IMR-90 (cell line): ENCODE measurements at regions of chr2 and their contacts with region 1.

Region 1: DNA sequence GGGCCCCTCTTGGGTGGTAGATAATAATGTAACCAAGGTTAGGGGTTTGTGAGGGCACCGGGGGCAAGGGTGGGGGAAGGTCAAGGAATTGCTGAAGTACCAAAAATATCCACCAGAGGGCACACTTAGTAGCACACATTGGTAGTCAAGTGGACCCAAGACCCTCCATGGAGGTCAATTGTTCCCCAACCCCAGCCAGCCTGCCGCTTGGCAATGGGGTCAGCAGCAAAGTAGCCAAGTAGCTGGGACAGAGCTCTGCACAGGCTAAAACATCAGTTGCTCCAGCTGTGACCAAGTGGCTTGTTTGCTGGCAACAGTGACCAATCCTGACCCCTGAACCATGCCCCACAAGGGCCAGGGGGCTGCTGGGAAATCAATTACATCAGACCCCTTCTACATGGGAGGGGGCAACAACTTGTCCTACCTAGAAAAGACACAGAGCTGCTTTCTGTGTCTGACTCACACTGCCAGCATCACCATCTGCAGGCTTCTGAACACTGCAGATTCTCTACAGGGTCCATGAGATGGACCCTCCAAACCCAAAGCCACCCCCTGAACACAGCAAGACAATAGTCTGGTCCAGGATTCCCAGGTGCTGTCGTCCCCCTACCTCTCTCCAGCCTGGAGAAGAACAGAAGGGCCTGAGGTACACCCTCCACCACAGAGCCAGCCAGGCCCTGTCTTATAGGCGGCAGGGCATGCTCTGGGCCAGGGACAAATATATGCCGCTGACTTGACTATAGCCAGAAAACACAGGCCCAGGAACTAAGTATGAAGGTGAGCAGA is 76.0 kb downstream of the EMX1 start:
- DNase-seq: peak; percentile 13
- ATAC-seq: peak; percentile 74
- H3K4me3 ChIP-seq: no peak overlapping the region
- H3K27ac ChIP-seq: no peak overlapping the region
- H3K4me1 ChIP-seq: no peaks in the 10 kb centered on the region
- H3K27me3 ChIP-seq: no peaks in the 10 kb centered on the region
- CTCF ChIP-seq: peak; percentile 62
- POLR2A ChIP-seq: no peak
- RAD21 ChIP-seq: peak; percentile 61

Region 2: DNA sequence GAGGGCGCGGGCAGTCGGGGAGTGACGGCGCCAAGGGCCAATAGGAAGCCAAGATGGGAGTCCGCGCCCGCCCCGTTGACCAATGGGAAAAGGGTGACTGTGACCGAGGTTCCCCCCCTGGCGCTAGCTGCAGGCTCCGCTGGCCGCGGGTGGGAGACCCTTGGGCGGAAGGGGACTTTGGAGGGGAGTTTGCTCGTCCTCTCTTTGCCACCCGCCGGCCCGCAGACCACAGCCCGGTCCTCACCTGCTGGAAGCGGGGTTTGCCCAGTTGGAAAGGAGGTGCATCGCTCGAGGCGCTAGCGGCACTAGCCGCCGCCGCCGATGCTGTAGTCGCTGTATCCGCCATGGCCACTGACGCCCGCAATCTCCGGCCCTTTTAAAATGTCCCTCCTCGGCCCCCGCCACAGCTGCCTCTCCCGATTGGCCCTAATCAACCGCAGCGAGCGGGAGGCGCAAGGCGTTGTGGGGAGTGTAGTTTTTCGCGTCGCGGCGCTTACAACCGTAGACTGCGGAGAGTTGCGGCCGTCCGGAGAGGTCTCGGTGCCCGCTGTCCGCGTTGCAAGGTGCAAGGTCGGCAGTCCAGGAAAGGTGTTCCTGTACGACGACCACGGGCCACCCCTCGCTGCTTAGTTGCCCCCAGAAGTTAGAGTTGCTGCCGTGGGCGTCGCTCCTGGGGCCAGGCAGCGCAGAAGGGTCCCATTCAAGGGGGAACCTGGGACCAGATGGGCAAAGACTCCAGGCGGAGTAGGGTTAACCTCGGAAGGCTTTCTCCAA is 78.2 kb after region 1 on chr2 and contains the start of gene SFXN5:
- CTCF ChIA-PET with region 1: no interaction called
- POLR2A ChIA-PET with region 1: no interaction called
- dilution Hi-C with region 1: no loop called
- in situ Hi-C with region 1: no loop called
- intact Hi-C with region 1: loop called (anchors 1 kb)
- DNase-seq: peak; percentile 93
- ATAC-seq: peak; percentile 92
- H3K4me3 ChIP-seq: peak within 1 kb of the TSS; percentile 82
- H3K27ac ChIP-seq: peak within 1 kb of the TSS; percentile 86
- H3K4me1 ChIP-seq: peaks cover 12% of the 10 kb centered on the region
- H3K27me3 ChIP-seq: no peaks in the 10 kb centered on the region
- CTCF ChIP-seq: peak; percentile 36
- POLR2A ChIP-seq: peak; percentile 54; the same call in 1 of the 2 replicates
- RAD21 ChIP-seq: no peak
- total RNA-seq, gene SFXN5: 8.3 and 8.6 TPM in 2 replicates

Region 3: GRCh38 chr2:73156539-73157124 is 163.3 kb after region 1 on chr2:
- CTCF ChIA-PET with region 1: interaction called, 4 read pairs
- POLR2A ChIA-PET with region 1: no interaction called
- dilution Hi-C with region 1: no loop called
- in situ Hi-C with region 1: loop called (anchors 5 kb)
- intact Hi-C with region 1: loop called (anchors 1 kb)
- DNase-seq: peak; percentile 62
- ATAC-seq: peak; percentile 99
- H3K4me3 ChIP-seq: no peak overlapping the region
- H3K27ac ChIP-seq: no peak overlapping the region
- H3K4me1 ChIP-seq: no peaks in the 10 kb centered on the region
- H3K27me3 ChIP-seq: peaks cover 21% of the 10 kb centered on the region
- CTCF ChIP-seq: peak; percentile 91
- POLR2A ChIP-seq: no peak
- RAD21 ChIP-seq: peak; percentile 96

Region 4: GRCh38 chr2:73163483-73164367 is 170.4 kb after region 1 on chr2:
- CTCF ChIA-PET with region 1: no interaction called
- POLR2A ChIA-PET with region 1: no interaction called
- dilution Hi-C with region 1: no loop called
- in situ Hi-C with region 1: loop called (anchors 5 kb)
- intact Hi-C with region 1: loop called (anchors 1 kb)
- DNase-seq: peak; percentile 74
- ATAC-seq: peak; percentile 98
- H3K4me3 ChIP-seq: no peak overlapping the region
- H3K27ac ChIP-seq: no peak overlapping the region
- H3K4me1 ChIP-seq: no peaks in the 10 kb centered on the region
- H3K27me3 ChIP-seq: peaks cover 21% of the 10 kb centered on the region
- CTCF ChIP-seq: peak; percentile 94
- POLR2A ChIP-seq: 0 out of 2 replicates have a peak, but pooled peaks have one; percentile 25
- RAD21 ChIP-seq: peak; percentile 95

Region 5: GRCh38 chr2:73176881-73177644 is 183.7 kb after region 1 on chr2:
- CTCF ChIA-PET with region 1: interaction called, 5 read pairs
- POLR2A ChIA-PET with region 1: no interaction called
- dilution Hi-C with region 1: no loop called
- in situ Hi-C with region 1: no loop called
- intact Hi-C with region 1: loop called (anchors 5 kb)
- DNase-seq: peak; percentile 76
- ATAC-seq: peak; percentile 98
- H3K4me3 ChIP-seq: peak overlapping the region; percentile 72
- H3K27ac ChIP-seq: peak overlapping the region; percentile 48; the same call in 1 of the 2 replicates
- H3K4me1 ChIP-seq: 0 out of 2 replicates have a peak, but pooled peaks cover 2% of the 10 kb centered on the region
- H3K27me3 ChIP-seq: peaks cover 48% of the 10 kb centered on the region
- CTCF ChIP-seq: peak; percentile 99
- POLR2A ChIP-seq: no peak
- RAD21 ChIP-seq: peak; percentile 92